CD14-positive monocyte (primary cell): ENCODE measurements at regions of chr9 and their contacts with region 1.

Region 1: GRCh38 chr9:122092611-122093506 is at the start of gene TTLL11:
- DNase-seq: peak; percentile 93 to 96 (median 95)
- H3K4me3 ChIP-seq: peak within 1 kb of the TSS; percentile 59 to 83 (median 69)
- H3K4me3 Mint-ChIP-seq: peak within 1 kb of the TSS; percentile 83 to 95
- H3K27ac ChIP-seq: peak within 1 kb of the TSS in 1 of 2 donors; percentile 34
- H3K27ac Mint-ChIP-seq: peak within 1 kb of the TSS in 6 of 7 donors; percentile 30 to 89 (median 63)
- H3K4me1 ChIP-seq: peaks cover 26 to 29% of the 10 kb centered on the region in 2 donors
- H3K4me1 Mint-ChIP-seq: peaks cover 43% of the 10 kb centered on the region
- H3K27me3 ChIP-seq: peaks cover 0 to 8% of the 10 kb centered on the region in 2 donors
- H3K27me3 Mint-ChIP-seq: peaks cover 10 to 20% (median 19%) of the 10 kb centered on the region in 3 donors
- CTCF ChIP-seq: no peak
- polyA plus RNA-seq, gene TTLL11: 2.9 to 3.5 (median 3.1) TPM

Region 2: GRCh38 chr9:120579750-120580590 is 1512.9 kb before region 1 on chr9 and contains the start of gene CDK5RAP2:
- intact Hi-C with region 1: loop called in 1 of 2 experiments (anchors 10 kb)
- DNase-seq: peak; percentile 94 to 96 (median 94)
- H3K4me3 ChIP-seq: peak within 1 kb of the TSS; percentile 64 to 97 (median 95)
- H3K4me3 Mint-ChIP-seq: peak within 1 kb of the TSS; percentile 91 to 95
- H3K27ac ChIP-seq: peak within 1 kb of the TSS; percentile 37 to 90
- H3K27ac Mint-ChIP-seq: peak within 1 kb of the TSS; percentile 90 to 97 (median 93)
- H3K4me1 ChIP-seq: peaks cover 24 to 30% of the 10 kb centered on the region in 2 donors
- H3K4me1 Mint-ChIP-seq: peaks cover 23% of the 10 kb centered on the region
- H3K27me3 ChIP-seq: no peaks in the 10 kb centered on the region
- H3K27me3 Mint-ChIP-seq: no peaks in the 10 kb centered on the region
- CTCF ChIP-seq: no peak
- polyA plus RNA-seq, gene CDK5RAP2: 2.0 to 13.7 (median 6.1) TPM

Region 3: GRCh38 chr9:121674952-121675351 is 417.9 kb before region 1 on chr9:
- intact Hi-C with region 1: no loop called
- DNase-seq: no peak
- H3K4me3 ChIP-seq: no peak overlapping the region
- H3K4me3 Mint-ChIP-seq: no peak overlapping the region
- H3K27ac ChIP-seq: no peak overlapping the region
- H3K27ac Mint-ChIP-seq: peak overlapping the region in 1 of 7 donors; percentile 19
- H3K4me1 ChIP-seq: no peaks in the 10 kb centered on the region
- H3K4me1 Mint-ChIP-seq: no peaks in the 10 kb centered on the region
- H3K27me3 ChIP-seq: no peaks in the 10 kb centered on the region
- H3K27me3 Mint-ChIP-seq: peaks cover 5 to 12% (median 8%) of the 10 kb centered on the region in 3 donors
- CTCF ChIP-seq: no peak

Region 4: DNA sequence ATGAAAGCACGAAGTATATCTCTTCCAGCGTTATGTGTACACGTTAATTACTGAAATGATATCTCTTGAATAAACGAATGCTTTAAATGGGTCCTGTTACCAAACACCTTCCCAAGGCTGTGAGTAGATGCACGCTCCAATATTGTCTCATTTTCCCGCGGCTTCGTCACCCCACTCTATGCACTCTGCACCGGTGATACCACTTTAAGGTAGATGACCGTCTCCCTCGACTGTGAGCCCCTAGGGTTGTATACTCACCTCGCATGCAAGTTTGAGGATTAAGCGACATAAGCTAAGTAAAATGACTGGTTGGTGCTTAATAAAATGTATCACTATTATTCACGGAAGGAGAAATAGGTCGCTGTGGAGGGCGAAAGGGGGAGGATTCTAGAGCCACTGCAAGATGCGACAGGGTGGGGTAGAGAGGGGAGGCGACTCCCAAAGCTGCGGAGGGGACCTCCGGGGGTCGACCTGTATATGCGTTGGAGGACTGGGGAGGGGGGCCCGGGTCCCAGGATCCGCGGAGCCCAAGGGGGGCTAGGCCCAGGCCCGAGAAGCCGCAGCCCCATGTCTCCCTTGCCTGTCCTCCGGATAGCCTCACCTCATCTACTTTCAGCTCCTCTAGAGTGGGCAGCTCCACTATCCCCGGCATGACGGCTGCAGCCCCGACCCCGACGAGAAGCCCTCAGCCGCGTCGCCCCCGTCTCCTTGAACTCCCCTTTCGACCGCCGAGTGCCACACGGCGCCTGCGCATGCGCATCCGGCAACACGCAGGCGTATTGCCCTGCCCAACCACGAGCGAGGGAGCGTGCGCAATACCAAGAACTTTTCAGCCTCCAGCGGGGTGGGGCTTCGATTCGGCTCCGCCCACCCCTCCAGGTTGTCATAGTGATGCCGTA is 66.4 kb after region 1 on chr9 and contains the starts of genes MORN5 and NDUFA8:
- intact Hi-C with region 1: loop called (anchors 5 kb)
- DNase-seq: peak; percentile 94 to 97 (median 95)
- H3K4me3 ChIP-seq: peak within 1 kb of the TSS; percentile 67 to 94 (median 86)
- H3K4me3 Mint-ChIP-seq: peak within 1 kb of the TSS; percentile 98 to 99
- H3K27ac ChIP-seq: peak within 1 kb of the TSS; percentile 19 to 89
- H3K27ac Mint-ChIP-seq: peak within 1 kb of the TSS; percentile 88 to 95 (median 93)
- H3K4me1 ChIP-seq: peaks cover 7 to 10% of the 10 kb centered on the region in 2 donors
- H3K4me1 Mint-ChIP-seq: peaks cover 32% of the 10 kb centered on the region
- H3K27me3 ChIP-seq: peaks cover 0 to under 1% of the 10 kb centered on the region in 2 donors
- H3K27me3 Mint-ChIP-seq: peaks cover 9 to 13% (median 11%) of the 10 kb centered on the region in 3 donors
- CTCF ChIP-seq: no peak
- polyA plus RNA-seq, gene MORN5: not detected
- polyA plus RNA-seq, gene NDUFA8: 19.6 to 71.2 (median 63.5) TPM

Region 5: DNA sequence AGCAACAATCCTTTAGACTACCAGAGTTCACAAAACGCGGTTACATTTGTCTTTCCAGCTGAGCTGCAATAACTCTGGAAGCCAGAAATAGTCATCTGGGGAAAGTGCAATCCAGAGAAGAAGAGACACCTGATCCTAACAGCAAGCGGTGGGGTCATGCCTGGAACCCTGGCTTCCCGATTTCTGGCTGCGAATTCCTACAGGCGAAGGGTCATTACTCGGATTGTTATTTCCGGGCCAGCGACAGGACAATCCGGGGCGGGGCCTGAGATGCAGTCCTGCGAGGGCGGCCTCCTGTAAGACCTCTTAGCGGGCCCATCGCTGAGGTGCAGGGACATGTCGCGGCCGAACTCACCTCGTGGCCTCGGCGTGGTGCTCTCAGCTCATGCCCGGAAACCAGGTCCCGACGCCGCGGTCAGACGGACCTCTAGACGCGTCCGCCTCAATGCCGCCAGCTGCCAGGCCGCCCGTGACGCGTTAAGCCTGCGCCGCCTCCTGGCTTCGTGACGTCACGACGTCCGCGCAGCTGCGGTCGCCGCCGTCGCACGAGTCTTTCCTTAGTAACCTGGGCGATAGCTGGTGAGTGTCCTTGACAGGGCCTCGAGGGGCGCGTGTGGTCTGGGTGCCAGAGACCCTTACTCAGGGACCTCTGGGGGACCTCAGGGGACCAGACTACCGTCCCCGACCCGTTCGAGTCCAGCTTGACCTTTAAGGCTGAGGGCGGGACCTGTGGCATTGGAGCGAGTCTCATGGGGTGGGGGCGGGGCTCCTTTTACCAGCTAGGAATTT is 171.7 kb after region 1 on chr9 and contains the starts of genes MRRF and RBM18:
- intact Hi-C with region 1: loop called (anchors 10 kb)
- DNase-seq: peak; percentile 94 to 96 (median 96)
- H3K4me3 ChIP-seq: peak within 1 kb of the TSS; percentile 88 to 94 (median 89)
- H3K4me3 Mint-ChIP-seq: peak within 1 kb of the TSS; percentile 98 to 99
- H3K27ac ChIP-seq: peak within 1 kb of the TSS; percentile 84 to 100
- H3K27ac Mint-ChIP-seq: peak within 1 kb of the TSS; percentile 100
- H3K4me1 ChIP-seq: peaks cover 14 to 27% of the 10 kb centered on the region in 2 donors
- H3K4me1 Mint-ChIP-seq: peaks cover 27% of the 10 kb centered on the region
- H3K27me3 ChIP-seq: no peaks in the 10 kb centered on the region
- H3K27me3 Mint-ChIP-seq: no peaks in the 10 kb centered on the region
- CTCF ChIP-seq: no peak
- polyA plus RNA-seq, gene MRRF: 16.0 to 34.4 (median 16.2) TPM
- polyA plus RNA-seq, gene RBM18: 10.4 to 26.3 (median 25.3) TPM

Region 6: GRCh38 chr9:122350638-122351355 is 257.9 kb after region 1 on chr9:
- intact Hi-C with region 1: loop called in 1 of 2 experiments (anchors 10 kb)
- DNase-seq: peak; percentile 70 to 78 (median 72)
- H3K4me3 ChIP-seq: no peak overlapping the region
- H3K4me3 Mint-ChIP-seq: no peak overlapping the region
- H3K27ac ChIP-seq: no peak overlapping the region
- H3K27ac Mint-ChIP-seq: peak overlapping the region in 1 of 7 donors; percentile 57
- H3K4me1 ChIP-seq: peaks cover 24 to 29% of the 10 kb centered on the region in 2 donors
- H3K4me1 Mint-ChIP-seq: peaks cover 32% of the 10 kb centered on the region
- H3K27me3 ChIP-seq: peaks cover 0 to 27% of the 10 kb centered on the region in 2 donors
- H3K27me3 Mint-ChIP-seq: peaks cover 28 to 38% (median 35%) of the 10 kb centered on the region in 3 donors
- CTCF ChIP-seq: peak; percentile 92

Region 7: GRCh38 chr9:122810306-122810946 is 717.6 kb after region 1 on chr9:
- intact Hi-C with region 1: loop called in 1 of 2 experiments (anchors 10 kb)
- DNase-seq: peak; percentile 59 to 77 (median 63)
- H3K4me3 ChIP-seq: no peak overlapping the region
- H3K4me3 Mint-ChIP-seq: no peak overlapping the region
- H3K27ac ChIP-seq: no peak overlapping the region
- H3K27ac Mint-ChIP-seq: no peak overlapping the region
- H3K4me1 ChIP-seq: peaks cover 8 to 10% of the 10 kb centered on the region in 2 donors
- H3K4me1 Mint-ChIP-seq: peaks cover 9% of the 10 kb centered on the region
- H3K27me3 ChIP-seq: no peaks in the 10 kb centered on the region
- H3K27me3 Mint-ChIP-seq: peaks cover 0 to 7% (median 0%) of the 10 kb centered on the region in 3 donors
- CTCF ChIP-seq: peak; percentile 85